H1 (cell line): ENCODE measurements at regions of chr12 and their contacts with region 1.

Region 1: DNA sequence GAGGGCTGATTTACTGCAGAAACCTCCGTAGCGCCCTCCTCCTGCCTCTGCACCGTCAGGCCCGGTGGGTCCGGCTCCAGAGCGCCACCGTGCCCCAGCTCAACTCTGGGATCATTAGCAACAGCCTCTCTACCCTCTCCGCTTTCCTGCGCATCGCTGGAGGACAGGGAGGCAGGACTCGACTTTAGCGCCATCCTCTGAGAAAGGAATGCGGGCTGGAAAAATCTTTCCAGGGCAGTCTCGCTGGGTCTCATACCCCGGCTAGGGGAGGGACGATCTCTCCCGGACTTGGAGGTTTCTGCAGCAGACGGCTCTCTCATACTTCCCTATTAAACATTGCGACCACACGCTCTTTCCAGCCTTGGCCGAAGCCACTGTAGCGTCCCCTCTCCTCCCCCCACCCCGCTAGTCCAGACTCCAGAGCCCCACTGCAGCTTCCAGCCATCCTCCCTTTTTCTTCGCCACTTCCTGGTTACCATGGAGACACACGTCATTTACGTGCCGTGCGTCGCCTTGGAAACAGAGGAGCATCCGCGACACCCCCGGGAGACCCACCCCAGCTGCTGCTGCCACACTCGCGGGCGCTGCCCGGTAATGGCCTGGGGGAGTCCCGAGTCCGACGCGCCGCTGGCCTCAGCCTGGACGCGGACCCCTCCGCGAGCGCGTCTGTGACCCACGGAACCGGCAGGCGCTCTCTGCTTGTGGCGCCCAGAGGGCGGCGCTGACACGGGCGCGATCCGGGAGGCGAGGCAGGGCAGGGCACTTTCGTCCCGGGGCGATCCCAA is at the start of gene CCDC184:
- DNase-seq: peak in 1 of 2 experiments; percentile 83
- H3K4me3 ChIP-seq: peak within 1 kb of the TSS; percentile 35 to 80 (median 72)
- H3K27ac ChIP-seq: 0 out of 2 replicates have a peak within 1 kb of the TSS, but pooled peaks have one; percentile 31
- H3K4me1 ChIP-seq: peaks cover 6 to 20% (median 11%) of the 10 kb centered on the region in 4 experiments; a peak in 6 of 7 replicates
- H3K27me3 ChIP-seq: peaks cover 8 to 39% (median 25%) of the 10 kb centered on the region in 4 experiments
- CTCF ChIP-seq: peak; percentile 34 to 44 (median 35)
- EP300 ChIP-seq: no peak
- POLR2A ChIP-seq: peak in 1 of 2 experiments; percentile 36; a peak in 1 of 3 replicates
- RAD21 ChIP-seq: peak in 1 of 2 experiments; percentile 41; a peak in 3 of 4 replicates
- total RNA-seq, gene CCDC184: 2.2 and 2.5 TPM in 2 replicates

Region 2: GRCh38 chr12:48197971-48198671 is 14.8 kb after region 1 on chr12:
- CTCF ChIA-PET with region 1: interaction called, 63 read pairs
- POLR2A ChIA-PET with region 1: interaction called, 10 read pairs
- DNase-seq: peak; percentile 92 to 93
- H3K4me3 ChIP-seq: peak overlapping the region; percentile 63 to 90 (median 76)
- H3K27ac ChIP-seq: peak overlapping the region; percentile 66; the same call in 1 of the 2 replicates
- H3K4me1 ChIP-seq: peaks cover 0 to 2% (median 2%) of the 10 kb centered on the region in 4 experiments; a peak in 2 of 7 replicates
- H3K27me3 ChIP-seq: peaks cover 5 to 23% (median 23%) of the 10 kb centered on the region in 4 experiments
- CTCF ChIP-seq: peak; percentile 11 to 48 (median 39); a peak in 2 of 4 replicates
- EP300 ChIP-seq: no peak
- POLR2A ChIP-seq: peak; percentile 71 to 93
- RAD21 ChIP-seq: peak; percentile 17 to 29; a peak in 3 of 4 replicates

Region 3: DNA sequence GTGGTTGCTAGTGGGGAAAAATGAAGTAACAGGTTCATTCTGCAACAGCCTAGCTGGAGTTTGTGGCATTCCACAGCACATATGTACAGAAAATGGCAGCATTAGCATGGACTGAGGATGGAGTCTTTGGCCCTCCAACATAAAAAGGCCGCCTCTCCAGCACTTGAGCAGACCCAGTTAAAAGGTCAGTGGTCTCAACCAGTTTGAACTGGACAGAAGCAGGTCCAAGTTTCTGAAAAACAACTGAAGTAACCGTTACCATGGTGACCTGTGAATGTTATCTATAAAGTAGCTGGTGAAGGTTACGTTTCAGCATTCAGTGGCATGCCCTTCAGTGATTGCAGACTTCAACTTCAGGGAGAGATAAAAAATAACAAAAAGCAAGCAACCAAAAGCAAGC is 53.9 kb after region 1 on chr12:
- CTCF ChIA-PET with region 1: no interaction called
- POLR2A ChIA-PET with region 1: no interaction called
- DNase-seq: no peak
- H3K4me3 ChIP-seq: no peak overlapping the region
- H3K27ac ChIP-seq: no peak overlapping the region
- H3K4me1 ChIP-seq: no peaks in the 10 kb centered on the region
- H3K27me3 ChIP-seq: no peaks in the 10 kb centered on the region
- CTCF ChIP-seq: no peak
- EP300 ChIP-seq: no peak
- POLR2A ChIP-seq: no peak
- RAD21 ChIP-seq: no peak